ENCODE measurements at regions of chr12 and their contacts with region 1.

Region 1: DNA sequence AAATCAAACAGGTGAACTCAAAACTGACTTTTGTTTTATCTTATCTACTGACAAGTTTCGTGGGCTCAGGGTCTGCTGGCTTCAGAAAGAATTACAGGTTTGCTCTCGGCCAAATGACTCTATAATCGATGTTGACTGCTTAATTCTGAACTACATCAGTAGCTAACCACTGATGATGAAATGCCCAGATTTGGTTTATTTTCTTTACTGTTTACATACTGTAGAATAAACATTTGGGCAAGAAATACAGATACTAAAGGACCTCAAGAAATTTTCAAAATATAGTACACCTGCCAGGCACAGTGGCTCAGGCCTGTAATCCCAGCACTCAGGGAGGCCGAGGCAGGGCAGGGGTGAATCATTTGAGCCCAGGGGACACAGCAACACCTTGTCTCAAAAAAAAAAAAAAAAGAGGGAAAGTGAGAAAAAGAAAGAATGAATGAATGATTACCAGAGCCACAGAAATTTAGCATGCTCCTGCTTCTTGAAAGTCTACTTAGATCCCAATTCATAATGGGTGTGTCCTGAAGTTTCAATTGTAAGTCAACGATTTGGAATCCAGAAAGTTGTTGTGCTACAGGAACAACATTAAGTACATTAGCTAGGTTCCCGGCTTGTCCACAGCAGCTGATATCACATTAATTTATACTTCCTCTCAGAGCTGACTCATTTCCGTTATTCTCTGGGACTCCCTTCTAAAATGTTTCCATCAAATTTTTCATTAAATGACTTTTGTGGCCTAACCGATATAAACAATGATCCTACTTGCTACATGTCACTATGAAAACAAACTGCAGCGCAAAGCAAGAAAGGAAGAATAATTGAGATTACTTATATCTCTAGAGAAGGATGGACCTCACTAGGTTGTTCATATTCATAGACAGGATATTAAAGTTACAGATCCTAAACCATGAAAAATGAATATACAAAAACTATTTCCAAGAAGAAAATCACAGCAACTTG is 134.3 kb downstream of the MED13L start:
- DNase-seq: no peak
- ATAC-seq: peak; percentile 67
- H3K4me3 ChIP-seq: no peak overlapping the region
- H3K27ac ChIP-seq: no peak overlapping the region
- H3K4me1 ChIP-seq: peaks cover 19% of the 10 kb centered on the region
- H3K27me3 ChIP-seq: no peaks in the 10 kb centered on the region
- CTCF ChIP-seq: no peak
- EP300 ChIP-seq: no peak; a peak in 1 of 4 replicates
- POLR2A ChIP-seq: no peak
- RAD21 ChIP-seq: no peak

Region 2: DNA sequence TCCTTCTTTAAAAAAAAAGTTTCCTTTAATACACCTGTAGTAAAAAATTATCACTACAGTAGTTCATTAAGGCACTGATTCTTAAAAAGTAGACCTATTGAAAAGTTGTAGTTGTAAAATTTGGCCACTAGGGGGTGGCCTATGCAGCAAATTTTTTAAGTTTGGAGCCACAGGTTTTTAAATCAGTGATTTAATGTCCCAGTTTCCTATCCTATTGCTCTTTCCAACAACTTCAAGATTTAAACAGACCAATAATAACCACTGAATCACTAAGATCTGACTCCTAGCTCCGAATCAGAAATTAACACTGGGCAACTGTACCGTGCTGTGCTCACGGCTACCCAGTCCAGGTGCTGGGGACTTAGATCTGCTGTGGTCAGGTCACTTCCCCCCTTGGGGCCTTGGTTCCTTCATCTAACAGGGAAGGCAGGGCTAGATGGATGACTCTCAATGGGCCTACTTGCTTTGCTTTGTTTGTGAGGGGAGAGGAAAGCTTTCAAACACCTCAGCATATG is 145.0 kb before region 1 on chr12:
- CTCF ChIA-PET with region 1: interaction called, 10 read pairs
- POLR2A ChIA-PET with region 1: no interaction called
- RAD21 ChIA-PET with region 1: no interaction called
- SMC1A ChIA-PET with region 1: no interaction called
- in situ Hi-C with region 1: no loop called
- intact Hi-C with region 1: no loop called
- DNase-seq: no peak
- ATAC-seq: peak; percentile 68
- H3K4me3 ChIP-seq: no peak overlapping the region
- H3K27ac ChIP-seq: no peak overlapping the region
- H3K4me1 ChIP-seq: peaks cover 3% of the 10 kb centered on the region
- H3K27me3 ChIP-seq: no peaks in the 10 kb centered on the region
- CTCF ChIP-seq: peak; percentile 56 to 65 (median 64)
- EP300 ChIP-seq: no peak
- POLR2A ChIP-seq: no peak
- RAD21 ChIP-seq: peak; percentile 59

Region 3: GRCh38 chr12:116209503-116209902 is 66.3 kb after region 1 on chr12:
- CTCF ChIA-PET with region 1: no interaction called
- POLR2A ChIA-PET with region 1: no interaction called
- RAD21 ChIA-PET with region 1: no interaction called
- SMC1A ChIA-PET with region 1: no interaction called
- in situ Hi-C with region 1: no loop called
- intact Hi-C with region 1: no loop called
- DNase-seq: no peak
- ATAC-seq: no peak
- H3K4me3 ChIP-seq: no peak overlapping the region
- H3K27ac ChIP-seq: no peak overlapping the region
- H3K4me1 ChIP-seq: no peaks in the 10 kb centered on the region
- H3K27me3 ChIP-seq: no peaks in the 10 kb centered on the region
- CTCF ChIP-seq: no peak
- EP300 ChIP-seq: no peak
- POLR2A ChIP-seq: no peak
- RAD21 ChIP-seq: no peak

Region 4: GRCh38 chr12:116266168-116266601 is 123.0 kb after region 1 on chr12:
- CTCF ChIA-PET with region 1: no interaction called
- POLR2A ChIA-PET with region 1: no interaction called
- RAD21 ChIA-PET with region 1: no interaction called
- SMC1A ChIA-PET with region 1: no interaction called
- in situ Hi-C with region 1: no loop called
- intact Hi-C with region 1: loop called (anchors 5 kb)
- DNase-seq: no peak
- ATAC-seq: no peak
- H3K4me3 ChIP-seq: no peak overlapping the region
- H3K27ac ChIP-seq: no peak overlapping the region
- H3K4me1 ChIP-seq: no peaks in the 10 kb centered on the region
- H3K27me3 ChIP-seq: peaks cover 0 to 3% of the 10 kb centered on the region in 2 experiments; a peak in 1 of 4 replicates
- CTCF ChIP-seq: no peak
- EP300 ChIP-seq: no peak
- POLR2A ChIP-seq: no peak
- RAD21 ChIP-seq: no peak

Region 5: DNA sequence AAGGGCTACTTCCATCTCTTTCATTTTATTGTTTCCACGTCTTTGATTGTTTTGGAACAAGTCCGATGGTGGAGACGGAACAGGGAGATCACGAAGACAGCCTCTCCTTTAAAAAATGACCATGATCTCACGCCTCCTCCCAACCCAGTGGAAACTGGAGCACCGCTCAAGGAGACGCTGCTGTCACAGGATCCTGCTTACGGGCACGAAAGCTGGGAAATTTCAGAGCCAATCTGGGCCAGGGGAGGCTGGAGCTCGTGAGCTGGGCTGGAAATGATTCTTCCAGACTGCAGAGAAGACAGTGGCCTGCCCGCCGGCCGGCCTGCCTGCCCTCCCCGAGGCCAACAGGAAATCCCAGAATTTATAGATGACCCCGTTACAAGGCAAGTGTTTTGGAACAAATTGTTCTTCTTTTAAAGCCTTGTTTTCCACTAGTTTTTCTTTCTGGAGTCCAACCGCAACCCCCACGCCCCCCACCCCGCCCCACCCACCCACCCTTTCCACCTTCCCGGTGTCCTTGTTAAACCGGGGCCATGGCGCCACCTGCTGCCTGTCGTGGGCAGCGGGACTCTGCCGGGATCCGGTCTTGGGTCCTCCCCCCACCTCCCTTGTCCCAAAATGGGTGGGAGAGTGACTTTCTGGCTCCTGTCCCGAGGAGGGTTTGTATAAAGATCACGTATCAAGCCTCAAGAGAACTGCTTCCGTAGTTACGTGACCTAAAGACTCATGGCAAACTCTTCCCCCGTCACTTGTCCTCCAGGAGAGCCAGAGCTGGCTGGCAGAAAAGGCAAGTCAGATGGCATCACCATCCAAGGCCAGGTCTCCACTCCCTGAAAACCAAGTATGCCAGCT is 456.3 kb after region 1 on chr12:
- CTCF ChIA-PET with region 1: interaction called, 8 read pairs
- POLR2A ChIA-PET with region 1: no interaction called
- RAD21 ChIA-PET with region 1: no interaction called
- SMC1A ChIA-PET with region 1: interaction called, 4 read pairs
- in situ Hi-C with region 1: no loop called
- intact Hi-C with region 1: loop called (anchors 2 kb)
- DNase-seq: peak; percentile 7
- ATAC-seq: peak; percentile 63
- H3K4me3 ChIP-seq: no peak overlapping the region
- H3K27ac ChIP-seq: no peak overlapping the region
- H3K4me1 ChIP-seq: peaks cover 3% of the 10 kb centered on the region; the same call in 1 of the 2 replicates
- H3K27me3 ChIP-seq: no peaks in the 10 kb centered on the region
- CTCF ChIP-seq: peak; percentile 41 to 57 (median 42)
- EP300 ChIP-seq: no peak
- POLR2A ChIP-seq: no peak
- RAD21 ChIP-seq: peak; percentile 75

Region 6: DNA sequence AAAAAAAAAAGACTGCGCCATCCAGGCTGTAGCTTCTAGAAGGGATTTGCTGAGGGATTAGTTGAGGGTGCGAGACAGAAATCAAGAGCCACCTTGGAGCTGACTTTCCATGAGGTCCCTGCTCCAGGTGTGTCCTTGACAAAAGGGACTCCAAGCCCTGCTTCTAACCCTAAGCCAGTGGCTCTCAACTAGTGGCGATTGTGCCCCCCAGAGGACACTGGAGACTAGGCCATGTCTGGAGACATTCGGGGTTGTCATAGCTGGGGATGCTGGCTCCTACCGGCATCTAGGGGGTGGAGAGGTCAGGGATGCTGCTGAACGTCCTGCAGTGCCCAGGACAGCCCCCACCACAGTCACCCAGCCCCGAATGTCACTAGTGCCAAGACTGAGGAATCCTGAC is 554.1 kb after region 1 on chr12:
- CTCF ChIA-PET with region 1: interaction called, 3 read pairs
- POLR2A ChIA-PET with region 1: no interaction called
- RAD21 ChIA-PET with region 1: no interaction called
- SMC1A ChIA-PET with region 1: interaction called, 5 read pairs
- in situ Hi-C with region 1: no loop called
- intact Hi-C with region 1: loop called (anchors 5 kb)
- DNase-seq: no peak
- ATAC-seq: peak; percentile 85
- H3K4me3 ChIP-seq: no peak overlapping the region
- H3K27ac ChIP-seq: no peak overlapping the region
- H3K4me1 ChIP-seq: peaks cover 13% of the 10 kb centered on the region
- H3K27me3 ChIP-seq: peaks cover 6 to 19% of the 10 kb centered on the region in 2 experiments
- CTCF ChIP-seq: peak; percentile 31 to 51 (median 39); a peak in 4 of 6 replicates
- EP300 ChIP-seq: no peak
- POLR2A ChIP-seq: no peak
- RAD21 ChIP-seq: peak; percentile 78

Region 7: GRCh38 chr12:116708826-116709756 is 565.9 kb after region 1 on chr12:
- CTCF ChIA-PET with region 1: interaction called, 10 read pairs
- POLR2A ChIA-PET with region 1: no interaction called
- RAD21 ChIA-PET with region 1: interaction called, 4 read pairs
- SMC1A ChIA-PET with region 1: interaction called, 5 read pairs
- in situ Hi-C with region 1: no loop called
- intact Hi-C with region 1: no loop called
- DNase-seq: no peak
- ATAC-seq: peak; percentile 95
- H3K4me3 ChIP-seq: no peak overlapping the region
- H3K27ac ChIP-seq: no peak overlapping the region
- H3K4me1 ChIP-seq: no peaks in the 10 kb centered on the region
- H3K27me3 ChIP-seq: no peaks in the 10 kb centered on the region; a peak in 1 of 4 replicates
- CTCF ChIP-seq: peak; percentile 62 to 69 (median 63); a peak in 5 of 6 replicates
- EP300 ChIP-seq: no peak
- POLR2A ChIP-seq: no peak
- RAD21 ChIP-seq: peak; percentile 78

Measured in GM12878 (cell line).